GM12878 (cell line): ENCODE measurements at regions of chr17 and their contacts with region 1.

Region 1: GRCh38 chr17:28916302-28916934 is 13.5 kb upstream of the DHRS13 start:
- DNase-seq: no peak
- ATAC-seq: peak; percentile 89
- H3K4me3 ChIP-seq: no peak overlapping the region
- H3K27ac ChIP-seq: no peak overlapping the region
- H3K4me1 ChIP-seq: no peaks in the 10 kb centered on the region
- H3K27me3 ChIP-seq: no peaks in the 10 kb centered on the region
- CTCF ChIP-seq: peak; percentile 55 to 59 (median 57)
- EP300 ChIP-seq: no peak
- POLR2A ChIP-seq: no peak
- RAD21 ChIP-seq: peak; percentile 58

Region 2: GRCh38 chr17:28494445-28495188 is 421.8 kb before region 1 on chr17:
- CTCF ChIA-PET with region 1: no interaction called
- POLR2A ChIA-PET with region 1: no interaction called
- RAD21 ChIA-PET with region 1: no interaction called
- SMC1A ChIA-PET with region 1: no interaction called
- in situ Hi-C with region 1: no loop called
- intact Hi-C with region 1: no loop called
- DNase-seq: no peak
- ATAC-seq: peak; percentile 95
- H3K4me3 ChIP-seq: no peak overlapping the region
- H3K27ac ChIP-seq: no peak overlapping the region
- H3K4me1 ChIP-seq: peaks cover 9% of the 10 kb centered on the region
- H3K27me3 ChIP-seq: no peaks in the 10 kb centered on the region
- CTCF ChIP-seq: peak; percentile 91 to 99 (median 92); a peak in 5 of 6 replicates
- EP300 ChIP-seq: no peak
- POLR2A ChIP-seq: no peak
- RAD21 ChIP-seq: peak; percentile 95

Region 3: DNA sequence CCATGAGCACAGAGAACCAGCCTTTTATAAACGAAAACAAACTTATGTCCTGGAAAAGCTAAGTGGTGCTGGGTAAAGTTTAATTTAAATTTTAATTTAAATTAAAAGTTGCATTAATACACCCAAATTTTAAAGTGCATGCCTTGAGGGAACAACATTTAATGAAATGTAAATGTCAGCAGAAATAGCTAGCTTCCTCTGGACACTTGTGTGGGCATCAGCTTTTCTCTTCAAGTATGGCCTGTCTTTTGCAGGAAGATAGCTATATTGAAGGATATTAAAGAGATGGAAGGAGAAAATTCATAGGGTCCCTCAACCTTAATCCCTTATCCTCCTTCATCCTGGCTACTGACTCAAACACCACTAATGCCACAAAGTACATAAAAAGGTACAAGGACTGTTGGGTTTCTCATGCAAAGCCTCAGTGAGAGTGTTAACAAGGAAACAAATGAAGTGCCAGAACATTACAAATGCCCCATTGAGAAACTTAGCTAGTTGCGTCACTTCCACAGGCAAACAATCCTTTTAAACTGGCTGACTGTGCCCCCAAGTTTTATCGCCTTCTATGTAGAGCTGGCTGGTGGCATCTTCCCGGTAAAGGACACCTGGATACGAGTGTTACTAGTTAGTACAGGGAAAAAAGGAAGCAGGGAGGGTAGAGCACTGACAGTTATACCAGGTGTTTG is 20.8 kb after region 1 on chr17:
- CTCF ChIA-PET with region 1: interaction called, 19 read pairs
- POLR2A ChIA-PET with region 1: no interaction called
- RAD21 ChIA-PET with region 1: interaction called, 3 read pairs
- SMC1A ChIA-PET with region 1: interaction called, 3 read pairs
- in situ Hi-C with region 1: no loop called
- intact Hi-C with region 1: no loop called
- DNase-seq: no peak
- ATAC-seq: no peak
- H3K4me3 ChIP-seq: no peak overlapping the region
- H3K27ac ChIP-seq: no peak overlapping the region
- H3K4me1 ChIP-seq: peaks cover 11% of the 10 kb centered on the region; the same call in 1 of the 2 replicates
- H3K27me3 ChIP-seq: no peaks in the 10 kb centered on the region
- CTCF ChIP-seq: no peak
- EP300 ChIP-seq: no peak
- POLR2A ChIP-seq: no peak
- RAD21 ChIP-seq: no peak